Naive thymus-derived CD4-positive, alpha-beta T cell (primary cell): ENCODE measurements at regions of chr5 and their contacts with region 1.

Region 1: DNA sequence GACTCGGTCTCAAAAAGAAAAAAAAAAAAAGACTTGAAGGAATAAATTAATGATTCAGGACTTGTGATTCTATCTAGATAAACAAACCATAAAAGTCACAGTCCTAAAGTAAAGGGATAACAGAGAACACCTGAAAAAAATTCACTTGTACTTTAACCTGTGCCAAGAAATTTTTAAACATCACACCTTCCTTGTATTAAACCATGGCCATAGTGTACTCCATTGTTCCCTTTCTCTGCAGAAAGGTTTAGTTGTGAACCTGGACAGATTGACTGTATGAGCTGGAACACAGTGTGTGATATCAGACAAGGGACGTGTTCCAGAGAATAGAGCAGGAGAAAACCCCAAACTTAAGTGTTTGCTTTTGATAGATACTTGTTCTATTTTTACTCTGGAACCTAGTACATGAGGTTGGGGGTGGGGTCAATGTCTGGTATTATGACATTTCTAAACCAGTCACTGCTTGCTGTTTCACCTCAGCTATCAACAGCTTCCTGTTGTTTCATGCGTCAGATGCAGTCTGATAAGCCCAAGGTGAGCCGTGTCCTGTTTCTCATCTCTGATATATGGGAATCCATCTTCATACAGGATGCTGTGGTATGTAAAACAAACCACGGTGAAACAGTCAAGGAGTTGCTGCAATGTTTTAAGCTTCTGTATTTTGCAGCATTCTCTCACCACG is 62.5 kb upstream of the ITGA1 start:
- DNase-seq: peak in 8 of 9 donors; percentile 44 to 94 (median 90)
- ATAC-seq: peak; percentile 98
- H3K4me3 ChIP-seq: no peak overlapping the region
- H3K4me3 Mint-ChIP-seq: peak overlapping the region; percentile 63 to 92 (median 81)
- H3K27ac ChIP-seq: peak overlapping the region; percentile 61
- H3K27ac Mint-ChIP-seq: peak overlapping the region; percentile 89 to 98 (median 95)
- H3K4me1 ChIP-seq: peaks cover 33 to 37% of the 10 kb centered on the region in 2 donors
- H3K4me1 Mint-ChIP-seq: peaks cover 28 to 81% (median 69%) of the 10 kb centered on the region in 7 donors
- H3K27me3 ChIP-seq: no peaks in the 10 kb centered on the region
- H3K27me3 Mint-ChIP-seq: no peaks in the 10 kb centered on the region

Region 2: GRCh38 chr5:52693280-52693679 is 31.9 kb before region 1 on chr5:
- CTCF ChIA-PET with region 1: interaction called, 3 read pairs
- POLR2A ChIA-PET with region 1: interaction called, 6 read pairs
- intact Hi-C with region 1: loop called in 1 of 2 experiments (anchors 1 kb)
- DNase-seq: peak in 7 of 9 donors; percentile 10 to 27 (median 25)
- ATAC-seq: peak; percentile 48
- H3K4me3 ChIP-seq: no peak overlapping the region
- H3K4me3 Mint-ChIP-seq: no peak overlapping the region
- H3K27ac ChIP-seq: no peak overlapping the region
- H3K27ac Mint-ChIP-seq: peak overlapping the region in 2 of 9 donors; percentile 1 to 18
- H3K4me1 ChIP-seq: no peaks in the 10 kb centered on the region
- H3K4me1 Mint-ChIP-seq: peaks cover 0 to 17% (median 7%) of the 10 kb centered on the region in 7 donors
- H3K27me3 ChIP-seq: no peaks in the 10 kb centered on the region
- H3K27me3 Mint-ChIP-seq: peaks cover 0 to 26% (median 0%) of the 10 kb centered on the region in 5 donors

Region 3: GRCh38 chr5:52738095-52738506 is 12.9 kb after region 1 on chr5:
- CTCF ChIA-PET with region 1: interaction called, 9 read pairs
- POLR2A ChIA-PET with region 1: interaction called, 17 read pairs
- intact Hi-C with region 1: loop called (anchors 1 kb)
- DNase-seq: no peak
- ATAC-seq: no peak
- H3K4me3 ChIP-seq: no peak overlapping the region
- H3K4me3 Mint-ChIP-seq: peak overlapping the region in 9 of 10 donors; percentile 5 to 72 (median 31)
- H3K27ac ChIP-seq: no peak overlapping the region
- H3K27ac Mint-ChIP-seq: peak overlapping the region in 8 of 9 donors; percentile 9 to 71 (median 50)
- H3K4me1 ChIP-seq: peaks cover 19 to 26% of the 10 kb centered on the region in 2 donors
- H3K4me1 Mint-ChIP-seq: peaks cover 24 to 58% (median 44%) of the 10 kb centered on the region in 7 donors
- H3K27me3 ChIP-seq: no peaks in the 10 kb centered on the region
- H3K27me3 Mint-ChIP-seq: peaks cover 0 to 3% (median 0%) of the 10 kb centered on the region in 5 donors

Region 4: DNA sequence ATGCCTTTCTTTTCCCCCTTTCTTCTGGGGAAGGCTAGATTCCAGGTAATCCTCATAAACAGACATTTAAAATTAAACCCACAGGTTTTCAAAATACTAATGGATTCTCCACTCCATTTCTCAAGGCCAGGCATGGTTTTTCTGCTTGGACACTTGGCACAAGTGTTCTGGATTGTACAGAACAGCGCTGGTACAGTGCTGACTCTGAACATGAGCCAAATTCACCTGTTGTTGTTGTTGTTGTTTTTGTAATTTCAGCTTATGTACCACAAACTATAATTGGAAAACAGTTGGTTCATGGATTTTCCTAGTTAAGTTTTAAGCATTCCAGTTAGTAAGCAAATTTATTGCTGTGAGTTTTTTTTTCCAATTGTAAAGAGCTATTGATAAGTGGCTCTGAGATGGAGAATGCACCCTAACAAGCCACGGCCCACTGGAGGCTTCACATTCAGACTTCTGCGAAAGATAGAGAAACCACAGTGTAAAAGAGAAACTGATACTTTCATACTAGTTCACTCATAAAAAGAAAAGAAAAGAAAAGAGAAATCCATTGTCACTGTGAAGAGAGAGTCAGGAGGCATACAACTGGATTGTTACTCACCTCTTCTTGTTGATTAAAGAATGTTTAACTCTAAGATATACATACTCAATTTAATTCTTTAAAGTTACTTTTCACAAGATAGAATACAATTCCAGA is 46.3 kb after region 1 on chr5:
- CTCF ChIA-PET with region 1: no interaction called
- POLR2A ChIA-PET with region 1: interaction called, 4 read pairs
- intact Hi-C with region 1: loop called (anchors 1 kb)
- DNase-seq: peak in 4 of 9 donors; percentile 21 to 43 (median 26)
- ATAC-seq: peak; percentile 71
- H3K4me3 ChIP-seq: peak overlapping the region; percentile 3
- H3K4me3 Mint-ChIP-seq: peak overlapping the region in 9 of 10 donors; percentile 42 to 78 (median 67)
- H3K27ac ChIP-seq: peak overlapping the region; percentile 31
- H3K27ac Mint-ChIP-seq: peak overlapping the region; percentile 67 to 94 (median 85)
- H3K4me1 ChIP-seq: peaks cover 34 to 45% of the 10 kb centered on the region in 2 donors
- H3K4me1 Mint-ChIP-seq: peaks cover 35 to 76% (median 49%) of the 10 kb centered on the region in 7 donors
- H3K27me3 ChIP-seq: no peaks in the 10 kb centered on the region
- H3K27me3 Mint-ChIP-seq: peaks cover 0 to 7% (median 0%) of the 10 kb centered on the region in 5 donors

Region 5: DNA sequence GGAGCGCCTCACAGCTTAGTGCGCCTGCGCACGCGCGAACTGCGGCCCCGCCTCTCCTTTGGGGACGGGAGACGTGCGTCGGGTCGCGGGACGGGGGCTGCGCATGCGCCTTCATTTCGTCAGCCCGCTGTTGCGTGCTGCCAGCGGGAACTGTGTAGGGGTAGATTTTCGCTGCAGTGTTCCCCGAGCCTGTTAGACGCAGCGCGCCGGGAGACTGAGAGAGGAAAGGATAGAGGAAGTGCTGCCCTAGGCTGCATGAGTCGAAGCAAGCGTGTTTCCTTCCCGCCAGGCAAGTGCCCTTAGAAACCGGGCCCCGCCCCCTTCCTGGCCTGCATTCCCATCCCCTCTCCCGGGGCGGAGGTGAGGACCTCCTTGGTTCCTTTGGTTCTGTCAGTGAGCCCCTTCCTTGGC is 74.8 kb after region 1 on chr5:
- CTCF ChIA-PET with region 1: interaction called, 3 read pairs
- POLR2A ChIA-PET with region 1: interaction called, 9 read pairs
- intact Hi-C with region 1: loop called (anchors 1 kb)
- DNase-seq: peak; percentile 91 to 97 (median 94)
- ATAC-seq: peak; percentile 92
- H3K4me3 ChIP-seq: peak overlapping the region; percentile 88
- H3K4me3 Mint-ChIP-seq: peak overlapping the region; percentile 92 to 99 (median 98)
- H3K27ac ChIP-seq: peak overlapping the region; percentile 78
- H3K27ac Mint-ChIP-seq: peak overlapping the region; percentile 89 to 98 (median 95)
- H3K4me1 ChIP-seq: peaks cover 25 to 26% of the 10 kb centered on the region in 2 donors
- H3K4me1 Mint-ChIP-seq: peaks cover 36 to 86% (median 62%) of the 10 kb centered on the region in 7 donors
- H3K27me3 ChIP-seq: no peaks in the 10 kb centered on the region
- H3K27me3 Mint-ChIP-seq: peaks cover 0 to 6% (median 0%) of the 10 kb centered on the region in 5 donors

Region 6: DNA sequence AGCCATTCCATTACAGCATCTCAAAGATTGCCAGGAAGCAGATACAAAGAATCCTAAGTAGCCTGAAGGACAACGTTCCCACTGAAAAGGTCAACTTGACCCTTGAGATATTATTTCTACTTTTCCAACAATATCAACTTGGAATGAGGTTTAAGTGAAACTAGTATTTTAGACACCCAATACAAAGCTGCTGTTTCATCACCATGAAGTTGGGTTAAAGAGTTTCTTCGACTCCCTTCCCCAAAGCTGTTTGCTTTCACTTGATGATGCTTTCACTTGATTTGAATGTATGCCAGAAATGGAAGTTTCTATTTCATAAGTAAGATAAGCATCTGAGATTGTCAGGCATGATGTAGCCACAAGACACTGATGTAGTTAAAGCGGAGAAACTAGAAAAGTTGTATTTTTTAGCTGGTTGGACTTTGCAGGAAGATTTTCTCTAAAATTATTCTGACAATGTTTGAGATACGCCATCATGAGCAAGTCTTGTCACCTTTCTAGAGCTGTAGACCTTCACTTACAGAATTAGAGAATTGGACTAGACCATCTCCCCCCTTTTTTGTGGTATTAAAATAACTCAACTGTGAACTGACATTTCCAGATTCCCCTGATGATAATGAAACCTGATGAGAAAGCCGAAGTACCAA is 364.3 kb after region 1 on chr5:
- CTCF ChIA-PET with region 1: no interaction called
- POLR2A ChIA-PET with region 1: no interaction called
- intact Hi-C with region 1: loop called in 1 of 2 experiments (anchors 10 kb)
- DNase-seq: peak in 6 of 9 donors; percentile 29 to 60 (median 40)
- ATAC-seq: peak; percentile 65
- H3K4me3 ChIP-seq: no peak overlapping the region
- H3K4me3 Mint-ChIP-seq: peak overlapping the region in 7 of 10 donors; percentile 32 to 71 (median 47)
- H3K27ac ChIP-seq: no peak overlapping the region
- H3K27ac Mint-ChIP-seq: peak overlapping the region in 5 of 9 donors; percentile 25 to 76 (median 40)
- H3K4me1 ChIP-seq: peaks cover 0 to 16% of the 10 kb centered on the region in 2 donors
- H3K4me1 Mint-ChIP-seq: peaks cover 11 to 61% (median 19%) of the 10 kb centered on the region in 7 donors
- H3K27me3 ChIP-seq: no peaks in the 10 kb centered on the region
- H3K27me3 Mint-ChIP-seq: peaks cover 0 to 2% (median 0%) of the 10 kb centered on the region in 5 donors